T-cell (primary cell): ENCODE measurements at regions of chr6 and their contacts with region 1.

Region 1: DNA sequence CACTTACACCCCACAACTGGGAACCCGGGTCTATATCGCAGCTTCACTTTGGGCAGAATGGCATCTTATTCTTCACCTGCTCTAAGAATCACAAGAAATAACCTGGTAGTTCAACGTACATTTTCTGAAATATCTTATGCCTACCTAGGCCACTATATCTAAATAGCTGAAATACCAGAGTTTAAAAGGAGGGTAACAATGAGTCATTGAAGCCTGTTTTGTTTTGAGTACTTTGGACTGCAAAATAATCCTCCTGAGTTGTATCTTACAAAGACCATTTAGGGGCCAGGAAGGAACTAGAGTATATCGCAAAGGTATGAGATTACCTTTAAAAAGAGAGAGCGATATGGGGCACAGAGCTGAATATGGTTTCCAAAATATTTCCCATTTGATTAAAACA is 96.7 kb upstream of the NUP153 start:
- DNase-seq: no peak
- ATAC-seq: no peak
- H3K4me3 ChIP-seq: no peak overlapping the region
- H3K4me3 Mint-ChIP-seq: no peak overlapping the region
- H3K27ac ChIP-seq: no peak overlapping the region
- H3K27ac Mint-ChIP-seq: no peak overlapping the region
- H3K4me1 ChIP-seq: no peaks in the 10 kb centered on the region
- H3K4me1 Mint-ChIP-seq: peaks cover 0 to 2% (median 0%) of the 10 kb centered on the region in 3 donors
- H3K27me3 ChIP-seq: peaks cover 0 to 11% of the 10 kb centered on the region in 2 experiments
- H3K27me3 Mint-ChIP-seq: peaks cover 0 to 20% of the 10 kb centered on the region in 2 donors

Region 2: GRCh38 chr6:16956361-16956760 is 847.0 kb before region 1 on chr6:
- CTCF ChIA-PET with region 1: no interaction called
- POLR2A ChIA-PET with region 1: no interaction called
- DNase-seq: peak in 3 of 35 experiments; percentile 2 to 44 (median 2)
- ATAC-seq: peak in 3 of 4 experiments; percentile 40 to 97 (median 66)
- H3K4me3 ChIP-seq: no peak overlapping the region
- H3K4me3 Mint-ChIP-seq: no peak overlapping the region
- H3K27ac ChIP-seq: no peak overlapping the region
- H3K27ac Mint-ChIP-seq: no peak overlapping the region
- H3K4me1 ChIP-seq: peaks cover 0 to 9% of the 10 kb centered on the region in 2 experiments
- H3K4me1 Mint-ChIP-seq: peaks cover 9 to 12% (median 12%) of the 10 kb centered on the region in 3 donors
- H3K27me3 ChIP-seq: no peaks in the 10 kb centered on the region
- H3K27me3 Mint-ChIP-seq: peaks cover 3 to 9% of the 10 kb centered on the region in 2 donors

Region 3: DNA sequence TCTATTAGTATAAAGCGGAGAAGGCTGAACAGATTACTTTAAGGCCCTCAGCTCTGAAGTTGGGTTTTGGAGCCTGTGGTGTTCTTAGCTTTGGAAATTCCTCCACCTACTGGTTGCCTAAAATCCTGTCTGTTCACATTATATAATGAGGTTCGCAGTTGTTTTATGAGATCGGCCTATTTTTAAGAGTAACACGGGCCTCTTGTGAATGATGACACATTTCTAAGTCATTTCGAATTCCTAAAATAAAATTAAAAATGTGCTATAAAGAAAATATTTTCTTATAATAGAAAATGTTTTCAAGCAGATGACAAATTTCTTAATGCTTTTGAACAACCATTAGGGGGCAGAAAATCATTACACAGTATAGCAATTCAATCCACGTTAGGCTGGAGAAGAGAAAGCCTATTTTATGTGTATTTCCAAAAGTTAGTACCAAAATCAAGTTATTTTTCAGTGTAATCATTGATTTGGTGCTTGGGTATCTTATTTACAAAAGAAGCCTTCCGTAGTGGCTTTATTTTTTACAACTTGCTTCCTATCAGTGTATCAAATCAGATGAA is 219.1 kb before region 1 on chr6:
- CTCF ChIA-PET with region 1: interaction called, 6 to 19 read pairs
- POLR2A ChIA-PET with region 1: no interaction called
- DNase-seq: peak in 4 of 35 experiments; percentile 14 to 66 (median 28)
- ATAC-seq: peak; percentile 68 to 79 (median 71)
- H3K4me3 ChIP-seq: no peak overlapping the region
- H3K4me3 Mint-ChIP-seq: no peak overlapping the region
- H3K27ac ChIP-seq: no peak overlapping the region
- H3K27ac Mint-ChIP-seq: peak overlapping the region in 1 of 2 donors; percentile 30
- H3K4me1 ChIP-seq: peaks cover 3 to 16% of the 10 kb centered on the region in 2 experiments
- H3K4me1 Mint-ChIP-seq: peaks cover 7 to 11% (median 9%) of the 10 kb centered on the region in 3 donors
- H3K27me3 ChIP-seq: peaks cover 0 to 19% of the 10 kb centered on the region in 2 experiments
- H3K27me3 Mint-ChIP-seq: peaks cover 5 to 13% of the 10 kb centered on the region in 2 donors

Region 4: DNA sequence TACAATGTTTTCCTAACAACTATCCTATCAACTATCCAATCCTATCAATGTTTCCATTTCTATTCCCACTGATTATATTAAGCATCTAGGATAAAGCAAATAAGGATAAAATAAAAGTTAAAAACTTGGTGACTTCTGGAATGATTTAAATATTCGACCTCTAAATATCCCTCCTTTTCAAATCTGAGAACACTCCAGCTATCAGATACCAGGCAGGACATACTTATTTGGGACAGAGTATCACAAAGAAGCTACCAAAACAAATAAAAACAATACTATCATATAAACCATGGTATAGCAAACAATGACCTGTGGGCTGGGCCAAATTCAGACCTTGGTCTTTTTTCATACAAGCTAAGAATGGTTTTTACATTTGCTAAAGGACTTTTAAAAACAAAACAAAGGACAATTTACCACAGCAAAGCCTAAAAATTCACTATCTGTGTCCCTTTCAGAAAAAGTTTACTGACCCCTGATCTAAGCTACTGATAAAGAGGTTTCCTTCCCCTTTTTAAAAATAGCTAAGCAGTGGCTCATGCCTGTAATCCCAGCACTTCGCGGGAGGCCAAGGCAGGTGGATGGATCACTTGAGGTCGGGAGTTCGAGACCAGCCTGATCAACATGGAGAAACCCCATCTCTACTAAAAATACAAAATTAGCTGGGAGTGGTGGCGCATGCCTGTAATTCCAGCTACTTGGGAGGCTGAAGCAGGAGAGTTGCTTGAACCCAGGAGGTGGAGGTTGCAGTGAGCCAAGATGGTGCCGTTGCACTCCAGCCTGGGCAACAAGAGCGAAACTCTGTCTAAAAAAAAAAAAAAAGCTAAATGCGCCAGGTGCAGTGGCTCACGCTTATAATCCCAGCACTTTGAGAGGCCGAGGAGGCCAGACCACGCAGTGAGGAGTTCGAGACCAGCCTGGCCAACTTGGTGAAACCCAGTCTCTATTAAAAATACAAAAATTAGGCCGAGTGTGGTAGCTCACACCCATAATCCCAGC is 102.7 kb before region 1 on chr6:
- CTCF ChIA-PET with region 1: interaction called in 1 of 2 experiments, 13 read pairs
- POLR2A ChIA-PET with region 1: no interaction called
- DNase-seq: no peak
- ATAC-seq: no peak
- H3K4me3 ChIP-seq: no peak overlapping the region
- H3K4me3 Mint-ChIP-seq: peak overlapping the region in 1 of 3 donors; percentile 82
- H3K27ac ChIP-seq: no peak overlapping the region
- H3K27ac Mint-ChIP-seq: peak overlapping the region; percentile 78 to 84
- H3K4me1 ChIP-seq: peaks cover 24 to 40% of the 10 kb centered on the region in 2 experiments
- H3K4me1 Mint-ChIP-seq: peaks cover 48 to 68% (median 65%) of the 10 kb centered on the region in 3 donors
- H3K27me3 ChIP-seq: no peaks in the 10 kb centered on the region
- H3K27me3 Mint-ChIP-seq: no peaks in the 10 kb centered on the region

Region 5: DNA sequence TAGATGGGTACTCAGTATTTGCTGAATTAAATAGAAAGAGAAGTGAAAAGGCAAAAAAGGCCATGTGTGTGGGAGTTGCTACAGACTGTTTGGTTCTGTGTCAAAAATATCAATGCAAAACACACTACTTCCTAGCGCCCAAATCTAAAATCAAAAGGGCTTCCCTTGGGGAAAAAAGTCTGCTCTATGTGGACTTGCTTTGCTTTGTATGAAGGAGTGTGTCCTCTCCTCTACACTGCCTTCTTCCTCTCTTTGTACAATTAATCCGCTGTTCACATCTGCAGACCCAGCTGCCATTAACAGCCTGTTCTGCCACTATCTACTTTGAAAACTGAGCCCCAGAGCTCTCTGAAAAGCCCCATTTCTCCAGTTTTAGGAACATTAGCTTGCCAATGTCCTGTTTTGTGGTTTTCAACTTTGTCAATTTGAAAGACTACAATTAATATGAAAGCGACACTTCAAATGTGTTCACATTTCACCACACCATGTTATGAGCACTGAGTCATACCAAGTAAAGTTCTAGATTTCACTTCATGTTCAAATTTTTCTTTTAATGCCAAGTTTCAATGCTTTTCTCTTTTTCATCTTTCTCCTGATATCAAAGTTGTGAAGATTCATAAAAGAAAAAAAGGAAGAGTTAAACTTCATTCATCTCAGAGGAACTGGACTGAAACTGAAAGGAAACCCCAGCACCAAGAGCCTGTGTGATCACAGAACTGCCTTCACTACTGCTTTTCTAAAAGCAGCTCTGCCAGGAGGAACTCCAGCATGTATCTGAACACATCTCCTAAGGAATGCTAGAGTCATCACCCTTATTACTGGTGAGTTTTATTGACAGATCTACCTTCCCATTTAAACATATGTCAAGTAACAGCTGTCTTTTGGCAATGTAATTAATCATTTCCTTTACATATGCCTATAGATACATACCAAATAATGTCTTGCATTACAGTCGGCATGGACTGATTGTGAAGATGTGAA is 81.4 kb after region 1 on chr6:
- CTCF ChIA-PET with region 1: no interaction called
- POLR2A ChIA-PET with region 1: no interaction called
- DNase-seq: no peak
- ATAC-seq: no peak
- H3K4me3 ChIP-seq: no peak overlapping the region
- H3K4me3 Mint-ChIP-seq: peak overlapping the region; percentile 17 to 67 (median 56)
- H3K27ac ChIP-seq: no peak overlapping the region
- H3K27ac Mint-ChIP-seq: peak overlapping the region in 1 of 2 donors; percentile 28
- H3K4me1 ChIP-seq: no peaks in the 10 kb centered on the region
- H3K4me1 Mint-ChIP-seq: peaks cover 12 to 17% (median 17%) of the 10 kb centered on the region in 3 donors
- H3K27me3 ChIP-seq: peaks cover 0 to 8% of the 10 kb centered on the region in 2 experiments
- H3K27me3 Mint-ChIP-seq: peaks cover 8 to 14% of the 10 kb centered on the region in 2 donors